ENCODE measurements at regions of chr3 and their contacts with region 1.

Region 1: GRCh38 chr3:196774191-196774820 is 34.6 kb downstream of the PAK2 start:
- DNase-seq: peak; percentile 67
- H3K4me3 ChIP-seq: no peak overlapping the region
- H3K27ac ChIP-seq: peak overlapping the region; percentile 36
- H3K4me1 ChIP-seq: peaks cover 18% of the 10 kb centered on the region
- H3K27me3 ChIP-seq: no peaks in the 10 kb centered on the region
- CTCF ChIP-seq: no peak
- POLR2A ChIP-seq: no peak

Region 2: GRCh38 chr3:196388956-196389355 is 385.4 kb before region 1 on chr3:
- CTCF ChIA-PET with region 1: no interaction called
- POLR2A ChIA-PET with region 1: no interaction called
- dilution Hi-C with region 1: no loop called
- intact Hi-C with region 1: no loop called
- DNase-seq: peak; percentile 61
- H3K4me3 ChIP-seq: no peak overlapping the region
- H3K27ac ChIP-seq: no peak overlapping the region
- H3K4me1 ChIP-seq: no peaks in the 10 kb centered on the region
- H3K27me3 ChIP-seq: no peaks in the 10 kb centered on the region
- CTCF ChIP-seq: no peak
- POLR2A ChIP-seq: no peak

Region 3: DNA sequence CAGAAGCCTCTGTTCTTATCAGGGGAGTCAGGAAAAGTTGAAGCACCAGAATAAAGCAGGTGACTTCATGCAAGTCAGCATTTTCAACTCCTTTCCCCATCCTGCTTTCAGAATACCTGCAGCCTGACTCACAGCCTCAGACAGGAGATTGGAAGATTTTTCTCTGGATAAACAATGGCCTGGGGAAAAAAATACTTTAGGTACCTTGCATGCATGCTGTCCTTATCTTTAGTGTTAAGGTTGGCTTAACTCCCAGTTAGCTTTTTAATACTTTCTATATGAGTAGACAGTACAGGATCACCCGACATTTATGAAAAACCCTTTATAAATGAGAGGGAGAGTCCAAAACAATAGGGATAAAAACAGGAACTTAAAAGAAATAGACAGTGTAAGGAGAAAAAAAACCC is 18.9 kb after region 1 on chr3:
- CTCF ChIA-PET with region 1: no interaction called
- POLR2A ChIA-PET with region 1: no interaction called
- dilution Hi-C with region 1: no loop called
- intact Hi-C with region 1: loop called (anchors 2 kb)
- DNase-seq: peak; percentile 92
- H3K4me3 ChIP-seq: peak overlapping the region in 1 of 3 experiments; percentile 4
- H3K27ac ChIP-seq: peak overlapping the region; percentile 58
- H3K4me1 ChIP-seq: peaks cover 23% of the 10 kb centered on the region
- H3K27me3 ChIP-seq: no peaks in the 10 kb centered on the region
- CTCF ChIP-seq: no peak
- POLR2A ChIP-seq: peak; percentile 24

Measured in endothelial cell of umbilical vein (primary cell).